Esophagus squamous epithelium (tissue), 5 donors: ENCODE measurements at regions of chr6 and their contacts with region 1.

Region 1: GRCh38 chr6:7615611-7616383 is 25.8 kb downstream of the SNRNP48 start:
- DNase-seq: no peak
- H3K4me3 ChIP-seq: no peak overlapping the region
- H3K27ac ChIP-seq: no peak overlapping the region
- H3K4me1 ChIP-seq: peaks cover 0 to 23% (median 6%) of the 10 kb centered on the region in 3 donors
- H3K27me3 ChIP-seq: no peaks in the 10 kb centered on the region
- CTCF ChIP-seq: peak; percentile 57 to 85 (median 74)
- POLR2A ChIP-seq: no peak

Region 2: GRCh38 chr6:7282097-7282906 is 333.5 kb before region 1 on chr6:
- intact Hi-C with region 1: loop called (anchors 10 kb)
- DNase-seq: no peak
- H3K4me3 ChIP-seq: no peak overlapping the region
- H3K27ac ChIP-seq: no peak overlapping the region
- H3K4me1 ChIP-seq: peaks cover 0 to 20% (median 6%) of the 10 kb centered on the region in 3 donors
- H3K27me3 ChIP-seq: no peaks in the 10 kb centered on the region
- CTCF ChIP-seq: no peak
- POLR2A ChIP-seq: no peak